GM12878 (cell line): ENCODE measurements at regions of chr16 and their contacts with region 1.

Region 1: DNA sequence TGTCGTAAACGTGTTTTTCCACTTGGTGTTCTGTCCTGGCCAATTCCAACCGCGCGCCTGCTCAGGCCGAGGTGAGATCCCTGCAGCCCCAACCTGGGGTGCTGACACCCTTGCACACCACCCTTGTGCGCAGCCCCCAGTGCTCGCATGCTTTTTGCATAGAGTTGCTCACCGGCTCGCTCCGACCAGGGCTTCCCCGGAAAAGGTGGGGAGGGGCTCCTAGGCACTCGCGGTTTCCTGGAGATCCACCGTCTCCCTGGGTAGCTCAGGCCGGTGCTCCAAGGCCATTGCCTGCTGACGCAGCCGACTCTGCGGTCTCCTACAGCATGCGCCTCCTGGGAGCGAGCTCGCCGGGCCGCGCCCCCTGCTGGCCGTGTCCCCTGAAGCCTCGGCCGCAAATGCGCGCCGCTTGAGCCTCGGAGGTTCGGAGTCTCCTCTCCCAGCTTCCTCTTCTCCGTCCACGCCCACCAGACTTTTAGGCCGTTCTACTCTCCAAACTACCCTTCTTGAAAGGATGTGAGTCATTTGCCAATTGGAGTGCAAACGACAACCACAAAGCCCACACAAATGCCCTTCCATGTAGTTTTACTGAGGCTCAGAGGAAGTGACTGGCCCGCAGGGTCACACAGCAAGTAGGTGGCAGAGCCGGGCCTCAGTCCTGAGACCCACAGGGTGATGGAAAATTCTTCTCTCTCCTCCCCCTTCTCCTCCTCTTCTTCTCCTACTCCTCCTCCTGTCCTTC is 7.2 kb upstream of the PDP2 start:
- DNase-seq: peak; percentile 95
- ATAC-seq: peak; percentile 89
- H3K4me3 ChIP-seq: peak overlapping the region; percentile 65; the same call in 1 of the 2 replicates
- H3K27ac ChIP-seq: peak overlapping the region; percentile 9; the same call in 1 of the 2 replicates
- H3K4me1 ChIP-seq: peaks cover 20% of the 10 kb centered on the region
- H3K27me3 ChIP-seq: no peaks in the 10 kb centered on the region
- CTCF ChIP-seq: peak; percentile 91 to 96 (median 93)
- EP300 ChIP-seq: peak in 1 of 2 experiments; percentile 46; a peak in 1 of 4 replicates
- POLR2A ChIP-seq: peak; percentile 37; the same call in 1 of the 2 replicates
- RAD21 ChIP-seq: peak; percentile 16; the same call in 1 of the 2 replicates

Region 2: DNA sequence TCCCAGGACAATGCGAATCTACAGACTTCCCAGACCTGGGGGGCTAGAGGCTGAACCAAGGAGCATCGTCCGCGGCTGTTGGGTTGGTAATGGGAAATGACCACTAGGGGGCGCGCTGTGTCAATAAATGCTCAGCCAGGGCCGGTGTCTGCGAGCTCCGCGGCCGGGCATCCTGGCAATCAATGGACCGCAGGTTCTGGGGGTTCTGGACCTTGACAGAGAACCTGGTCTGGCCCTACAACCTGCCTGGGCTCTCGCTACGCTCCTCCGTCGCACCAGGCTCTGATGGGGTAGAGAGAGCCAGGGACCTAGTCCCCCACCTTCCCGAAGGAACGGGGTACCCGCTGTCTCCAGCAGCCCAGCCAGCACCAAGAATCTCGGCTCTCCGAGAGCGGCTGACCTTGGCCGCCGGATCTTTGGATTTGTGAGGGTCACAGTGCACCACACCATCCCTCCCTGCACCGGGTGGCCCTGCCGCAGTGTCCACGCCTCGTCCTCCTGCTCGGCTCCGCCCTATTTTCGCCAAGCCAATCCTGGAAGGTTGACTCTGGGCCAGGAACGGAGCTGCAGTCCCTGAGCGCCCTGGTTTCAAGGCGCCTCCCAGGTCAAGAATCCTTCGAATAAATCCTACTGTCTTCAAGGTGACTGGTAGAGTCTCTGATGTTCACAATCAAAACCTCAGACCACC is 466.4 kb before region 1 on chr16:
- CTCF ChIA-PET with region 1: interaction called, 22 read pairs
- POLR2A ChIA-PET with region 1: no interaction called
- RAD21 ChIA-PET with region 1: interaction called, 16 read pairs
- SMC1A ChIA-PET with region 1: interaction called, 3 read pairs
- in situ Hi-C with region 1: loop called (anchors 5 kb)
- intact Hi-C with region 1: loop called (anchors 5 kb)
- DNase-seq: no peak
- ATAC-seq: peak; percentile 97
- H3K4me3 ChIP-seq: peak overlapping the region; percentile 2; the same call in 1 of the 2 replicates
- H3K27ac ChIP-seq: no peak overlapping the region
- H3K4me1 ChIP-seq: peaks cover 4% of the 10 kb centered on the region; the same call in 1 of the 2 replicates
- H3K27me3 ChIP-seq: peaks cover 2% of the 10 kb centered on the region in 2 experiments; a peak in 2 of 4 replicates
- CTCF ChIP-seq: peak; percentile 69 to 93 (median 79)
- EP300 ChIP-seq: no peak
- POLR2A ChIP-seq: no peak
- RAD21 ChIP-seq: peak; percentile 85

Region 3: DNA sequence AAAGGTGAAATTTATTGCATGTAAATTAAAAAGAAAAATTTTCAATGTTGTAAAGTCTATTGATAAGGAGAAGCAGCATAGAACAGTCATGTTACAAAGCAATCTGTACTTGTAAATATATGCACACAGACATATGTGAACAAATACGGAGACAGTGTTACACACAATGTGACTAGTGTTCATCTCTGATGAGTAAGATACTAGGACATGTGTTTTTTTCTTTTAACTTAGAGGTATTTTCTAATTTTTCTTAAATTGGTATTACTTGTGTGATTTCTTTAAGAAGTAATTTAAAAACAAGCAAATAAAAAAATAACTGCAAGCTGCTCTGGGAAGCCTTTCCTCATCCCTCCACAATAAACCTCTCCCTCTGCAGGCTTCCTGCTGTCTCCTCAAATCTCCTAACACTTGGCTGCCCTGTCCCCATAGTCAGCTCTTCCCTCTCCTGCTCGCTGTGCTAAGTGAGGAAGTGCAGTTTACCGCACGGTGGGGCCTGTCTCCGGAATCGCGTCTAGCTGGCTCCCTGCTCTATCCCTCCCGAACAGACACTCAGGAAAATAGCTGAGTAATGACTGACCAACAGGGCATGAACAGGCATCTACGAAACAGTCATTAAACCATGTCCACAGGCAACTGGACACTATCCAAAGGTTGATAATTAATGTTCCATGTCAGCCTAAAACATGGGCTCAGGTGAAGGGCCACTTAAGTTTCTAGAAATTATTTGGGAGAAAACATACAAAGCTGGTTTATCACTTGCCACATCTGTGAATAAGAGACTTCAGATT is 212.5 kb before region 1 on chr16:
- CTCF ChIA-PET with region 1: interaction called, 28 read pairs
- POLR2A ChIA-PET with region 1: no interaction called
- RAD21 ChIA-PET with region 1: interaction called, 19 read pairs
- SMC1A ChIA-PET with region 1: no interaction called
- in situ Hi-C with region 1: no loop called
- intact Hi-C with region 1: no loop called
- DNase-seq: no peak
- ATAC-seq: peak; percentile 27; the same call in 1 of the 3 replicates
- H3K4me3 ChIP-seq: no peak overlapping the region
- H3K27ac ChIP-seq: no peak overlapping the region
- H3K4me1 ChIP-seq: no peaks in the 10 kb centered on the region
- H3K27me3 ChIP-seq: 0 out of 4 replicates have a peak, but pooled peaks cover 0 to 2% of the 10 kb centered on the region in 2 experiments
- CTCF ChIP-seq: no peak
- EP300 ChIP-seq: no peak
- POLR2A ChIP-seq: no peak
- RAD21 ChIP-seq: no peak

Region 4: GRCh38 chr16:66751303-66751991 is 121.7 kb before region 1 on chr16 and contains the start of gene DYNC1LI2:
- CTCF ChIA-PET with region 1: interaction called, 12 read pairs
- POLR2A ChIA-PET with region 1: no interaction called
- RAD21 ChIA-PET with region 1: interaction called, 7 read pairs
- SMC1A ChIA-PET with region 1: no interaction called
- in situ Hi-C with region 1: no loop called
- intact Hi-C with region 1: loop called (anchors 5 kb)
- DNase-seq: no peak
- ATAC-seq: peak; percentile 79
- H3K4me3 ChIP-seq: peak within 1 kb of the TSS; percentile 84
- H3K27ac ChIP-seq: peak within 1 kb of the TSS; percentile 92
- H3K4me1 ChIP-seq: peaks cover 7% of the 10 kb centered on the region
- H3K27me3 ChIP-seq: peaks cover 0 to 3% of the 10 kb centered on the region in 2 experiments; a peak in 1 of 4 replicates
- CTCF ChIP-seq: peak; percentile 70 to 92 (median 72); a peak in 4 of 6 replicates
- EP300 ChIP-seq: no peak
- POLR2A ChIP-seq: peak; percentile 86
- RAD21 ChIP-seq: no peak
- polyA plus RNA-seq, gene DYNC1LI2: 6.0 to 8.3 TPM

Region 5: GRCh38 chr16:66830422-66831404 is 42.4 kb before region 1 on chr16 and contains the start of gene NAE1:
- CTCF ChIA-PET with region 1: interaction called, 106 read pairs
- POLR2A ChIA-PET with region 1: interaction called, 5 read pairs
- RAD21 ChIA-PET with region 1: interaction called, 38 read pairs
- SMC1A ChIA-PET with region 1: interaction called, 37 read pairs
- in situ Hi-C with region 1: no loop called
- intact Hi-C with region 1: loop called (anchors 2 kb)
- DNase-seq: peak; percentile 57
- ATAC-seq: peak; percentile 95
- H3K4me3 ChIP-seq: peak within 1 kb of the TSS; percentile 96
- H3K27ac ChIP-seq: peak within 1 kb of the TSS; percentile 70
- H3K4me1 ChIP-seq: peaks cover 9% of the 10 kb centered on the region
- H3K27me3 ChIP-seq: no peaks in the 10 kb centered on the region
- CTCF ChIP-seq: peak; percentile 93 to 99 (median 99); a peak in 5 of 6 replicates
- EP300 ChIP-seq: no peak
- POLR2A ChIP-seq: peak; percentile 97
- RAD21 ChIP-seq: peak; percentile 52
- polyA plus RNA-seq, gene NAE1: 76.6 to 101 TPM

Region 6: GRCh38 chr16:66886346-66886745 is 13.2 kb after region 1 on chr16:
- CTCF ChIA-PET with region 1: interaction called, 22 read pairs
- POLR2A ChIA-PET with region 1: interaction called, 4 read pairs
- RAD21 ChIA-PET with region 1: interaction called, 12 read pairs
- SMC1A ChIA-PET with region 1: interaction called, 5 read pairs
- in situ Hi-C with region 1: no loop called
- intact Hi-C with region 1: no loop called
- DNase-seq: no peak
- ATAC-seq: no peak
- H3K4me3 ChIP-seq: no peak overlapping the region
- H3K27ac ChIP-seq: no peak overlapping the region
- H3K4me1 ChIP-seq: no peaks in the 10 kb centered on the region; the same call in 1 of the 2 replicates
- H3K27me3 ChIP-seq: no peaks in the 10 kb centered on the region
- CTCF ChIP-seq: no peak
- EP300 ChIP-seq: no peak
- POLR2A ChIP-seq: no peak
- RAD21 ChIP-seq: no peak

Region 7: DNA sequence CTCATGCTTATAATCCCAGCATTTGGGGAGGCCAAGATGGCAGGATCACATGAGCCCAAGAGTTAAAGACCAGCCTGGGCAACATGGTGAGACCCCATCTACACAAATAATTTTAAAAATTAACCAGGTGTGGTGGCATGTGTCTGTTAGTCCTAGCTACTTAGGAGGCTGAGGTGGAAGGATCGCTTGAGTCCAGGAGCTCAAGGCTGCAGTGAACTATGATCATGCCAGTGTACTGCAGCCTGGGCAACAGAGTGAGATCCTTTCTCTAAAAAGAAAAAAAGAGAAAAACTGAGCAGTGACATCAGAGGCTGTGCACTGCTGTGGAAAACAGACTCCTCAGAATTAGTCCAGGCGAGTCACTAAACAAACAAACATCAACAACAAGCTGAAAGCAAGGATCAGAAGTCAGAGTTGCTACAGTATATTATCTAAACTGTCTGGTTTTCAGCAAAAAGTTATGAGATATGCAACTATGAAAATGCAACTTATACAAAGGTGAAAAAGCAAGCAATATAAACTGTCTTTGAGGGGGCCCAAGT is 195.2 kb after region 1 on chr16:
- CTCF ChIA-PET with region 1: no interaction called
- POLR2A ChIA-PET with region 1: no interaction called
- RAD21 ChIA-PET with region 1: no interaction called
- SMC1A ChIA-PET with region 1: no interaction called
- in situ Hi-C with region 1: no loop called
- intact Hi-C with region 1: no loop called
- DNase-seq: no peak
- ATAC-seq: no peak
- H3K4me3 ChIP-seq: no peak overlapping the region
- H3K27ac ChIP-seq: no peak overlapping the region
- H3K4me1 ChIP-seq: peaks cover 4% of the 10 kb centered on the region
- H3K27me3 ChIP-seq: no peaks in the 10 kb centered on the region
- CTCF ChIP-seq: no peak
- EP300 ChIP-seq: no peak
- POLR2A ChIP-seq: no peak
- RAD21 ChIP-seq: no peak